OCI-LY7 (cell line): ENCODE measurements at regions of chr2 and their contacts with region 1.

Region 1: GRCh38 chr2:189440947-189441708 is at the start of gene WDR75:
- DNase-seq: peak; percentile 95
- H3K4me3 ChIP-seq: peak within 1 kb of the TSS; percentile 76
- H3K27ac ChIP-seq: peak within 1 kb of the TSS; percentile 71
- H3K4me1 ChIP-seq: peaks cover 26% of the 10 kb centered on the region
- CTCF ChIP-seq: no peak
- total RNA-seq, gene WDR75: 44.1 and 79.6 TPM in 2 replicates

Region 2: DNA sequence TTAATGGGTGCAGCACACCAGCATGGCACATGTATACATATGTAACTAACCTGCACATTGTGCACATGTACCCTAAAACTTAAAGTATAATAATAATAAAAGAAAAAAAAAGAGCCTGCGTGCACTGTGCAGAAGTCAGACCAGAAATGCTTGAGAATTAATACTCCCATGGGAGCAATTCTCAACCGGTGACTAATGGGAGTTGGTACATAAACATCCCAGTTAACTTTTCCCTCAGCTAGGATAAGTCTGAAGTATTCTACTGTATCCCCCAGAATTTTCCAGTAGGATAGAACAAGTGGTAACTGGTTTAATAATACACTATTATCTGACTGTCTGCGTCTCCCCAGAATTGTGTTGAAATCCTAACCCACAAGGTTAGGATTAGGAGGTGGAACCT is 148.0 kb before region 1 on chr2:
- CTCF ChIA-PET with region 1: no interaction called
- POLR2A ChIA-PET with region 1: no interaction called
- intact Hi-C with region 1: no loop called
- DNase-seq: no peak
- H3K4me3 ChIP-seq: no peak overlapping the region
- H3K27ac ChIP-seq: no peak overlapping the region
- H3K4me1 ChIP-seq: no peaks in the 10 kb centered on the region
- CTCF ChIP-seq: no peak

Region 3: GRCh38 chr2:189454009-189454408 is 12.9 kb after region 1 on chr2:
- CTCF ChIA-PET with region 1: interaction called, 3 read pairs
- POLR2A ChIA-PET with region 1: interaction called, 13 read pairs
- intact Hi-C with region 1: no loop called
- DNase-seq: no peak
- H3K4me3 ChIP-seq: no peak overlapping the region
- H3K27ac ChIP-seq: no peak overlapping the region
- H3K4me1 ChIP-seq: no peaks in the 10 kb centered on the region
- CTCF ChIP-seq: no peak

Region 4: GRCh38 chr2:189466660-189467059 is 25.5 kb after region 1 on chr2:
- CTCF ChIA-PET with region 1: no interaction called
- POLR2A ChIA-PET with region 1: interaction called, 35 read pairs
- intact Hi-C with region 1: no loop called
- DNase-seq: peak; percentile 16
- H3K4me3 ChIP-seq: no peak overlapping the region
- H3K27ac ChIP-seq: no peak overlapping the region
- H3K4me1 ChIP-seq: peaks cover 29% of the 10 kb centered on the region
- CTCF ChIP-seq: peak; percentile 76

Region 5: GRCh38 chr2:189661148-189661956 is 220.2 kb after region 1 on chr2 and contains the start of gene ASNSD1:
- CTCF ChIA-PET with region 1: no interaction called
- POLR2A ChIA-PET with region 1: interaction called, 3 read pairs
- intact Hi-C with region 1: loop called (anchors 1 kb)
- DNase-seq: peak; percentile 100
- H3K4me3 ChIP-seq: peak within 1 kb of the TSS; percentile 90
- H3K27ac ChIP-seq: peak within 1 kb of the TSS; percentile 38
- H3K4me1 ChIP-seq: peaks cover 41% of the 10 kb centered on the region
- CTCF ChIP-seq: peak; percentile 99
- total RNA-seq, gene ASNSD1: 36.3 and 36.8 TPM in 2 replicates

Region 6: DNA sequence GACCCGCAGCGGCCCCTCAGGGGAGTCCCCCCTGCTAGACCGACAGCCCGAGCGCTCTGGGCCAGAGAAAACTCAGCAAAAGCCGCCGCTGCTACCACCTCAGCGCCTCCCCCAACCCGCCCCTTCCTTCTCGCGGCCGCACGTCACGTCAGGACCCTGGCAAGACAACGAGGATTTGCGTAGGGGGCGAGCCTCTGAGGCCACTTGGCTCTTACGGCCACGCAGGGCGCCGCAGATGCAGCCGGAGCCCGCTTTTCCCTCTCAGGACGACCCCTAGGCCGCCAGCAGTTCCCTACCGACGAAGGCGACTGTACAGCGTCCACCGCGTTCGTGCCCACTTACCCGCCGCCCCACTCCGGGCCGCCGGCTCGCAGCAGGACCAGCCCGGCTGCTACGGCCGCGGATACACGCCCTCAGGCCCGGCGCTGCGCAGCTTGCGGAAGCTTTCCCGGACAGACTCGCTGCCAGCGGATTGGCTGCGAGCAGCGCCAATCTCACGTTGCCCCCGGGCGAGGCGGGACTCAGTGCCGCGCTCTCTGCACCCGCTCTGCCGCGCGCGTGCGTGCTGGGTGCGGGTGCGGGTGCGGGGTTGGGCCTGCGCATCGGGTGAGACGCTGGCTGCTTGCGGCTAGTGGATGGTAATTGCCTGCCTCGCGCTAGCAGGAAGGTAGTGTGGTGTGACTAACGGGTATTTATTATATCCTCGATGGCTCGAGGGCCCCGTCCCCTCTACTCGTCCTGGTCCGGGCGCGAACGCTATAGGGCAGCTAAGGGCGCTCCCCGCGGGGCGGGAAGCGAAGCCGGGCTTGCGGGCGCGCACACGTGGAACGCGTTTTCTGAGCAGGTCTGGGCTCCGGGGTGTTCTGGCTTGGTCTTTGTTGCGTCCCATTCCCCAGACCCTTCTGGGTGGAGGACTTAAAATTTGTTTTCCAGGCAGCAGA is 343.1 kb after region 1 on chr2 and contains the starts of genes ORMDL1 and PMS1:
- CTCF ChIA-PET with region 1: no interaction called
- POLR2A ChIA-PET with region 1: no interaction called
- intact Hi-C with region 1: loop called (anchors 10 kb)
- DNase-seq: peak; percentile 97
- H3K4me3 ChIP-seq: peak within 1 kb of the TSS; percentile 79
- H3K27ac ChIP-seq: peak within 1 kb of the TSS; percentile 75
- H3K4me1 ChIP-seq: peaks cover 27% of the 10 kb centered on the region
- CTCF ChIP-seq: no peak
- total RNA-seq, gene ORMDL1: 49.3 and 59.3 TPM in 2 replicates
- total RNA-seq, gene PMS1: 31.2 and 37.3 TPM in 2 replicates

Region 7: GRCh38 chr2:189952536-189953109 is 511.5 kb after region 1 on chr2:
- CTCF ChIA-PET with region 1: no interaction called
- POLR2A ChIA-PET with region 1: interaction called, 3 read pairs
- intact Hi-C with region 1: loop called (anchors 2 kb)
- DNase-seq: peak; percentile 77
- H3K4me3 ChIP-seq: peak overlapping the region; percentile 37
- H3K27ac ChIP-seq: peak overlapping the region; percentile 94
- H3K4me1 ChIP-seq: peaks cover 54% of the 10 kb centered on the region
- CTCF ChIP-seq: no peak

Region 8: GRCh38 chr2:190880378-190881073 is 1439.4 kb after region 1 on chr2 and contains the start of gene GLS:
- CTCF ChIA-PET with region 1: no interaction called
- POLR2A ChIA-PET with region 1: no interaction called
- intact Hi-C with region 1: loop called (anchors 5 kb)
- DNase-seq: peak; percentile 96
- H3K4me3 ChIP-seq: peak within 1 kb of the TSS; percentile 84
- H3K27ac ChIP-seq: peak within 1 kb of the TSS; percentile 87
- H3K4me1 ChIP-seq: peaks cover 28% of the 10 kb centered on the region
- CTCF ChIP-seq: no peak
- total RNA-seq, gene GLS: 82.0 and 102 TPM in 2 replicates